Posterior vena cava (tissue), 2 donors: ENCODE measurements at regions of chr1 and their contacts with region 1.

Region 1: DNA sequence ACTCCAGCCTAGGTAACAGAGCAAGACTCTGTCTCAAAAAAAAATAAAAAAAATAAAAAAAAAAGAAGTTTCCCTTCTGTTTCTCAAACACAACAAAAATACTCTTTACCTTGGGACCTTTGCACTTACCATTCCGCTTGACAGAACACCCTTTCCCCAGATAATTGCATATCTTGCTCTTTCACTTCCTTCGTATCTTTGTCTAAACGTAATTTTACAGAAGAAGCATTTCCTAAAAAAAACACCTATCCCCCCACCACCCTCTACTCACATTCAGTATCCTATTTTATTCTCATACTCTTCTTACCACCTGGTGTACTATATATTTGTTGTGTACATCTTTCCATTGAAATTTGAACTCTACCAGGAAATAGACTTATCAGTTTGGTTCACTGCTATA is 32.7 kb downstream of the ASH1L start:
- DNase-seq: no peak

Region 2: GRCh38 chr1:155801149-155801548 is 271.2 kb after region 1 on chr1:
- intact Hi-C with region 1: loop called in 1 of 2 experiments (anchors 10 kb)
- DNase-seq: no peak